Endothelial cell of umbilical vein (primary cell): ENCODE measurements at regions of chr10 and their contacts with region 1.

Region 1: GRCh38 chr10:101214446-101215396 is 14.5 kb downstream of the LBX1 start:
- DNase-seq: peak; percentile 44
- H3K4me3 ChIP-seq: no peak overlapping the region
- H3K27ac ChIP-seq: no peak overlapping the region
- H3K4me1 ChIP-seq: no peaks in the 10 kb centered on the region
- H3K27me3 ChIP-seq: peaks cover 68 to 71% of the 10 kb centered on the region in 2 experiments
- CTCF ChIP-seq: peak; percentile 85 to 94
- POLR2A ChIP-seq: no peak

Region 2: DNA sequence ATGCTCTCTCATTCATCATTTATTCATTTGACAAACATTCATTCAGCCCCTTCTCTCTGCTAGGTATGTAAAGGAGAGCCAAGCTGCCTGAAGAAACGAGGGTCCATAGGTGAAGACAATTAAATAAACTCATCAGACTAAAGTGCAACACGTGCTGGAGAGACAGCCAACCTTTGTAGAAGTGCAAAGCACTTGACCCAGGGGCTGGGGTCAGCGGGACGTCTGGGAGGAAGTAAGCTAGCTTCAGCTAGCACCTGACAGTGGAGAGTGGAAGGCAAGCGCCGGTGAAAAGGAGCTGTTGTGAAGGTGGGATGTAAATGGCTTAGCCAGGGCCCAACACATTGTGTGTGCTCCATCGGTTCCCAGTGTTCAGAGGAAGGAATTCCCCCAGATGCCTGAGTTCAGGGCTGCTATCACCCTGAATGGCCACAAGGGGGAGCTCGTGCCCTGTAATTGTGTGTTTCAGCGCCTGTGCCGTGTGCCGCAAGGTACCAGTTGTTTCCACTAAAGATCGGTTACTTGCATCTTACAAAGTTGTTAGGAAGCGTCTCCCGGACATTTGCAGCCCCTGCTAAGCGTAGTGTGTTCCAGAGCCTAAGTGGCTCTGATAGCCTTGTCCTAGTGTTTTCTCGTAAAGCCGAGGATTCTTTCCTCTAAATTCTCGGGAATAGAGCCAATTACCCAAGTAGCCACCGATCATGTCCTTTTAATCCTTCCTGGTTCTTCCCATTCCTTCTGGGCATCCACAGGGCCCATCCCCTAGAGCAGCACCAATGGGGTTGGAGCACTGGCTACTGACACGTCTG is 53.0 kb before region 1 on chr10:
- CTCF ChIA-PET with region 1: interaction called, 8 read pairs
- POLR2A ChIA-PET with region 1: no interaction called
- dilution Hi-C with region 1: no loop called
- intact Hi-C with region 1: loop called (anchors 1 kb)
- DNase-seq: peak; percentile 74
- H3K4me3 ChIP-seq: no peak overlapping the region
- H3K27ac ChIP-seq: no peak overlapping the region
- H3K4me1 ChIP-seq: no peaks in the 10 kb centered on the region
- H3K27me3 ChIP-seq: peaks cover 25 to 34% of the 10 kb centered on the region in 2 experiments
- CTCF ChIP-seq: peak; percentile 94 to 98
- POLR2A ChIP-seq: no peak

Region 3: GRCh38 chr10:101238732-101239105 is 24.0 kb after region 1 on chr10:
- CTCF ChIA-PET with region 1: interaction called, 34 read pairs
- POLR2A ChIA-PET with region 1: no interaction called
- dilution Hi-C with region 1: no loop called
- intact Hi-C with region 1: loop called (anchors 2 kb)
- DNase-seq: no peak
- H3K4me3 ChIP-seq: no peak overlapping the region
- H3K27ac ChIP-seq: no peak overlapping the region
- H3K4me1 ChIP-seq: peaks cover 2% of the 10 kb centered on the region
- H3K27me3 ChIP-seq: peaks cover 73 to 77% of the 10 kb centered on the region in 2 experiments
- CTCF ChIP-seq: peak; percentile 84 to 92
- POLR2A ChIP-seq: no peak

Region 4: GRCh38 chr10:101285519-101286070 is 70.9 kb after region 1 on chr10:
- CTCF ChIA-PET with region 1: interaction called, 52 read pairs
- POLR2A ChIA-PET with region 1: no interaction called
- dilution Hi-C with region 1: no loop called
- intact Hi-C with region 1: no loop called
- DNase-seq: no peak
- H3K4me3 ChIP-seq: no peak overlapping the region
- H3K27ac ChIP-seq: no peak overlapping the region
- H3K4me1 ChIP-seq: no peaks in the 10 kb centered on the region
- H3K27me3 ChIP-seq: peaks cover 75% of the 10 kb centered on the region in 2 experiments
- CTCF ChIP-seq: no peak
- POLR2A ChIP-seq: no peak

Region 5: GRCh38 chr10:101441541-101442455 is 227.1 kb after region 1 on chr10:
- CTCF ChIA-PET with region 1: interaction called, 16 read pairs
- POLR2A ChIA-PET with region 1: no interaction called
- dilution Hi-C with region 1: no loop called
- intact Hi-C with region 1: loop called (anchors 1 kb)
- DNase-seq: peak; percentile 70
- H3K4me3 ChIP-seq: no peak overlapping the region
- H3K27ac ChIP-seq: no peak overlapping the region
- H3K4me1 ChIP-seq: no peaks in the 10 kb centered on the region
- H3K27me3 ChIP-seq: no peaks in the 10 kb centered on the region
- CTCF ChIP-seq: peak; percentile 51 to 61
- POLR2A ChIP-seq: no peak

Region 6: DNA sequence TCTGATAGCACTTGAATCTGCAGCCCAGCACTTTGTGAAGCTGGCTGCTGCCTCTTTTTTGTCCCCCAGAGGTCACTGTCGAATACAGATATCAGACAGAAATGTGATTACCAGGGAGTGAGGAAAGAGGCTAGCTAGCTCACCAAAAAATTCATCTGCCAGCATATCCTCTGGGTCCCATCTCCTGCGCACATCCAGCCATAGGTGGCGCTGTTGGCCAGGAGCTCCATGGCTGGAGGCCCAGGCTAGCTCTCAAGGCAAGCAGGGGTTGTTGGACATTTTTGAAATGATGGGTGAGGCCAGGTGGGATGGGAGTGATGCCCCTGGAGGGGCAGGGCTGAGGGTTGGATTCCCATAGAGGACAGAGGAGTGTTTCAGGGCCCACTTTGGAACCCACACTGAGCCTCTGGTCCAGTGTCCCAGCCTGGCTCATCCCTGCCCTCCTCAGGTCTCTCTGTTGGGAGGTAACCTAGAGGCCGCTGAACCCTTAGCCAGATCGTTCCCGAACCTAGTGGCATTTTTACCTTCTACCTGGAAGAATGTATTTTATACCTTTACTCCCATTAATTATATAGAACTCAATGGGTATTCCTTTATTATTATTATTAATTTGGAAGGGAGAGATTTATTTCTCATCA is 388.2 kb after region 1 on chr10:
- CTCF ChIA-PET with region 1: interaction called, 12 read pairs
- POLR2A ChIA-PET with region 1: no interaction called
- dilution Hi-C with region 1: no loop called
- intact Hi-C with region 1: no loop called
- DNase-seq: peak; percentile 56
- H3K4me3 ChIP-seq: no peak overlapping the region
- H3K27ac ChIP-seq: no peak overlapping the region
- H3K4me1 ChIP-seq: no peaks in the 10 kb centered on the region
- H3K27me3 ChIP-seq: no peaks in the 10 kb centered on the region
- CTCF ChIP-seq: peak; percentile 82 to 95
- POLR2A ChIP-seq: no peak